ENCODE measurements at regions of chr11 and their contacts with region 1.

Region 1: GRCh38 chr11:113906038-113906437 is 1.4 kb downstream of the HTR3B start:
- DNase-seq: peak; percentile 42
- ATAC-seq: peak; percentile 86
- H3K4me3 Mint-ChIP-seq: no peak overlapping the region
- H3K27ac Mint-ChIP-seq: no peak overlapping the region
- H3K4me1 Mint-ChIP-seq: peaks cover 21% of the 10 kb centered on the region
- H3K27me3 Mint-ChIP-seq: no peaks in the 10 kb centered on the region
- CTCF ChIP-seq: no peak

Region 2: GRCh38 chr11:113806406-113806805 is 99.6 kb before region 1 on chr11:
- CTCF ChIA-PET with region 1: interaction called, 12 read pairs
- POLR2A ChIA-PET with region 1: no interaction called
- DNase-seq: peak; percentile 68
- ATAC-seq: peak; percentile 99
- H3K4me3 Mint-ChIP-seq: no peak overlapping the region
- H3K27ac Mint-ChIP-seq: no peak overlapping the region
- H3K4me1 Mint-ChIP-seq: no peaks in the 10 kb centered on the region
- H3K27me3 Mint-ChIP-seq: no peaks in the 10 kb centered on the region
- CTCF ChIP-seq: peak; percentile 35; the same call in 1 of the 2 replicates

Region 3: DNA sequence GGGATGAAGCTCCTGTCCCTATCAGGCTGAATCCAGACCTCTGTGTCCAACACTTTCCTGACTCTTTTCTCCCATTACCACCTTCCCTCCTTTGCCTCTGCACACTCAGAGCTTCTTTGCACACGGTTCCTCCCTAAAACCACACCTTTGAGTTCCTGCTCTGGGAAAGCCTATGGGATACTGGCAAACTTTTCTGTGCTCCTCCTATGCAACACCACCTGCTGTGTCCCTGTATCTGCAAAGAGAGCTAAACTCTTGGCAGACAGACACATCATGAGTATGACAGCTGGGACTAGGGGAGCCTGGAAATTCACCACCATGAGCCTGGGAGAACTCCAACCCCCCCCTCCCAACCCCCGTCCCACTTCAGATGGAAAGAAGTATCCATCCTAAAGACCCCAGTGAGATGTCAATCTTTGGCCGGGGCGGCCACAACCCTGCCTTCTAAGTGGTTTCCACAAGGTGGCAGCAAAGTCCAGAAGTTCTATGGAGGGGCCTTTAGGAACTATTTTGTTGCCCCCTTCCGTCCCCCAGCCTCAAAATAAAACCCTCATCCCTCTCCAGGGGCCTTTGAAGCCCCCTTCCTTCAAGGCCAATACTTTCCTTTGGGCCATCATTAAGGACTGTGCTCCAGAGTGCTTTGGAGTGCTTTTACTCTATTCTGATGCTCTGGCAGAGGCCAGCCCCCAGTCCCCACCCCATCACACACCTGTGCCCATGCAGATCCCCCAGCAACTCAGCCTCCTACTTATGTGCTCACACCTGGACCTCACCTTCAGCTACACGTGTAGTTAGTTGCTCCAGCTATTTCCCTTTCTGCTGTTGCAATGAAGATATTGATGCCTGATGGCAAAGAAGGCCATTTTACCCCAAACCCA is 88.3 kb after region 1 on chr11:
- CTCF ChIA-PET with region 1: interaction called, 16 read pairs
- POLR2A ChIA-PET with region 1: no interaction called
- DNase-seq: peak; percentile 73
- ATAC-seq: peak; percentile 68
- H3K4me3 Mint-ChIP-seq: no peak overlapping the region
- H3K27ac Mint-ChIP-seq: no peak overlapping the region; the same call in 1 of the 2 replicates
- H3K4me1 Mint-ChIP-seq: peaks cover 21% of the 10 kb centered on the region
- H3K27me3 Mint-ChIP-seq: no peaks in the 10 kb centered on the region
- CTCF ChIP-seq: peak; percentile 83

Measured in WTC11 (cell line).